Esophagus muscularis mucosa (tissue), 4 donors: ENCODE measurements at regions of chr17 and their contacts with region 1.

Region 1: GRCh38 chr17:56939901-56940343 is 20.9 kb downstream of the COIL start:
- DNase-seq: no peak
- H3K4me3 ChIP-seq: no peak overlapping the region
- H3K27ac ChIP-seq: no peak overlapping the region
- H3K4me1 ChIP-seq: peaks cover 0 to 4% (median 0%) of the 10 kb centered on the region in 4 donors
- H3K27me3 ChIP-seq: no peaks in the 10 kb centered on the region
- CTCF ChIP-seq: peak; percentile 64 to 76 (median 66)
- EP300 ChIP-seq: no peak
- POLR2A ChIP-seq: no peak

Region 2: GRCh38 chr17:56819431-56820145 is 120.3 kb before region 1 on chr17:
- intact Hi-C with region 1: loop called (anchors 2 kb)
- DNase-seq: no peak
- H3K4me3 ChIP-seq: no peak overlapping the region
- H3K27ac ChIP-seq: no peak overlapping the region
- H3K4me1 ChIP-seq: peaks cover 0 to 8% (median 7%) of the 10 kb centered on the region in 4 donors
- H3K27me3 ChIP-seq: no peaks in the 10 kb centered on the region
- CTCF ChIP-seq: peak; percentile 81 to 96 (median 85)
- EP300 ChIP-seq: no peak
- POLR2A ChIP-seq: no peak

Region 3: GRCh38 chr17:56891784-56892183 is 48.1 kb before region 1 on chr17:
- intact Hi-C with region 1: loop called (anchors 5 kb)
- DNase-seq: no peak
- H3K4me3 ChIP-seq: no peak overlapping the region
- H3K27ac ChIP-seq: no peak overlapping the region
- H3K4me1 ChIP-seq: peaks cover 0 to 4% (median 0%) of the 10 kb centered on the region in 4 donors
- H3K27me3 ChIP-seq: no peaks in the 10 kb centered on the region
- CTCF ChIP-seq: peak; percentile 46 to 59 (median 48)
- EP300 ChIP-seq: no peak
- POLR2A ChIP-seq: no peak

Region 4: GRCh38 chr17:57045868-57046704 is 106.2 kb after region 1 on chr17:
- intact Hi-C with region 1: no loop called
- DNase-seq: no peak
- H3K4me3 ChIP-seq: peak overlapping the region; percentile 46 to 56 (median 49)
- H3K27ac ChIP-seq: peak overlapping the region in 3 of 4 donors; percentile 25 to 40 (median 30)
- H3K4me1 ChIP-seq: peaks cover 12 to 18% (median 16%) of the 10 kb centered on the region in 4 donors
- H3K27me3 ChIP-seq: peaks cover 0 to 23% (median 0%) of the 10 kb centered on the region in 4 donors
- CTCF ChIP-seq: no peak
- EP300 ChIP-seq: no peak
- POLR2A ChIP-seq: no peak